ENCODE measurements at regions of chr19 and their contacts with region 1.

Region 1: DNA sequence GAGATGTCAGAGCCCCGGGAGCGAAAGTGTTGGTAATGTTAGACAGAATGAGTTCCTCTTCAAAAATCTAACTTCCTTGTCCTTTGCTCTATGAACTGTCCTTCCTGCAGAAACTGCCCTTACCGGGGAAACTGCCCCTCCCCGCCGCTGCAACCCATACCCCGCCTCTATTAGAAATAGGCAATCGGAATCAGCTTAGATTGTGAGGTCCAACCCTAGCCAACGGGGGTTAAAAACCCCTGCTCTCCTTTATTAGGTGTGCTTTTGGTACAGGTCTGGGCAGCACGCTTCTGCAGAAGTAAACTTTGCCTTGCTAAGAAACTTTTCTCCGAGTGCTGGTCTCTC is 11.5 kb upstream of the CAPNS1 start:
- DNase-seq: no peak
- ATAC-seq: no peak
- H3K4me3 ChIP-seq: peak overlapping the region; percentile 69 to 78
- H3K4me3 Mint-ChIP-seq: peak overlapping the region; percentile 82 to 88 (median 85)
- H3K27ac ChIP-seq: peak overlapping the region; percentile 66
- H3K27ac Mint-ChIP-seq: peak overlapping the region; percentile 88 to 90
- H3K4me1 ChIP-seq: peaks cover 6 to 43% of the 10 kb centered on the region in 2 experiments
- H3K4me1 Mint-ChIP-seq: peaks cover 6 to 34% (median 29%) of the 10 kb centered on the region in 3 donors
- H3K27me3 ChIP-seq: no peaks in the 10 kb centered on the region
- H3K27me3 Mint-ChIP-seq: no peaks in the 10 kb centered on the region

Region 2: GRCh38 chr19:35908973-35909683 is 219.2 kb before region 1 on chr19:
- CTCF ChIA-PET with region 1: no interaction called
- POLR2A ChIA-PET with region 1: no interaction called
- DNase-seq: peak in 19 of 35 experiments; percentile 15 to 76 (median 31)
- ATAC-seq: peak; percentile 27 to 68 (median 40)
- H3K4me3 ChIP-seq: no peak overlapping the region
- H3K4me3 Mint-ChIP-seq: peak overlapping the region in 2 of 3 donors; percentile 24 to 51
- H3K27ac ChIP-seq: peak overlapping the region; percentile 47
- H3K27ac Mint-ChIP-seq: peak overlapping the region; percentile 68 to 81
- H3K4me1 ChIP-seq: peaks cover 13 to 50% of the 10 kb centered on the region in 2 experiments
- H3K4me1 Mint-ChIP-seq: peaks cover 36 to 48% (median 40%) of the 10 kb centered on the region in 3 donors
- H3K27me3 ChIP-seq: no peaks in the 10 kb centered on the region
- H3K27me3 Mint-ChIP-seq: no peaks in the 10 kb centered on the region

Region 3: GRCh38 chr19:36067681-36068080 is 60.7 kb before region 1 on chr19:
- CTCF ChIA-PET with region 1: no interaction called
- POLR2A ChIA-PET with region 1: no interaction called
- DNase-seq: no peak
- ATAC-seq: no peak
- H3K4me3 ChIP-seq: no peak overlapping the region
- H3K4me3 Mint-ChIP-seq: no peak overlapping the region
- H3K27ac ChIP-seq: no peak overlapping the region
- H3K27ac Mint-ChIP-seq: no peak overlapping the region
- H3K4me1 ChIP-seq: no peaks in the 10 kb centered on the region
- H3K4me1 Mint-ChIP-seq: no peaks in the 10 kb centered on the region
- H3K27me3 ChIP-seq: no peaks in the 10 kb centered on the region
- H3K27me3 Mint-ChIP-seq: no peaks in the 10 kb centered on the region

Region 4: DNA sequence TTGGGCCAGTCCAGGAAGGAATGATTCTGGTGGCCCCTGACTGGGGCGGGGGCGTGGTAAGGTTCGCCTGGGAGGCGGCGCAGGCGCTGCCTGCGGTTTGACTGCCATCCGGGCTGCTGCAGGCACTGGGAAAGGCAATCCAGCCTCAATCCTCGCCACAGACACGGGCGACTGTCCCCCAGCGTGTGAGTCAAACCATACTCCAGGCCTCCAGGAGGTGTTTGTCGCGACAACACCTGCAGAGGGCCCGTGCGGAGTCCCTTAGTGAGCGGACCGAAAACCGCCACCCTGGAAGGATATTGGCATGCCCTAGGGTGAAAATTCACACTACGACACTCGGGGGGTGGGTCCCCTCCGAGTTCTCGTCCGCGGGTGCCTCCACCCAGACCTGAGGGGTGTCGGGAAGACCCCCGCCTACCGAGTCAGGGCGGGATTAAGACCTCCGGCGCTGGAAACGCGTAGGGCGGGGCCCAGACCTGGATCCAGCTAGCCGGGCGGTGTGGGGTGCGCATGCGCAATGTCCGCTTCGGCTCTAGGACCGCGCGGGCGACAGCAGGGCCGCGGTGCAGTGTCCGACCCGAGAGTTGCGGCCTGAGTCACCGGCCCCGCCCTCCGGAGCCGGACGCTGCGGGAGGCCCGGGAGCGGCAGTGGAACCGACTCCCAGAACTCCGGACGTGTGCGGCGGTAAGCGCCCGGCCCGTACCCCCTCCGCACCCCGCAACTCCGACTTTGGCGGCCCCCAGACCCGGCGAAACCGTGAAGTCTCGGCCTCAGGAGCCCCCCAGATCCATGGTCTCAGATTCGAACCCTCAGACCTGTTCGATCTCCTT is 11.3 kb after region 1 on chr19 and contains the start of gene CAPNS1:
- CTCF ChIA-PET with region 1: interaction called in 1 of 2 experiments, 10 read pairs
- POLR2A ChIA-PET with region 1: interaction called in 1 of 2 experiments, 3 read pairs
- DNase-seq: peak; percentile 68 to 93 (median 83)
- ATAC-seq: peak; percentile 72 to 77 (median 74)
- H3K4me3 ChIP-seq: peak within 1 kb of the TSS; percentile 55 to 68
- H3K4me3 Mint-ChIP-seq: peak within 1 kb of the TSS; percentile 94 to 96 (median 95)
- H3K27ac ChIP-seq: peak within 1 kb of the TSS; percentile 57
- H3K27ac Mint-ChIP-seq: peak within 1 kb of the TSS; percentile 93 to 96
- H3K4me1 ChIP-seq: peaks cover 0 to 22% of the 10 kb centered on the region in 2 experiments
- H3K4me1 Mint-ChIP-seq: peaks cover 13 to 24% (median 19%) of the 10 kb centered on the region in 3 donors
- H3K27me3 ChIP-seq: peaks cover 0 to 3% of the 10 kb centered on the region in 2 experiments
- H3K27me3 Mint-ChIP-seq: no peaks in the 10 kb centered on the region
- total RNA-seq, gene CAPNS1: 214 to 339 (median 308) TPM

Region 5: DNA sequence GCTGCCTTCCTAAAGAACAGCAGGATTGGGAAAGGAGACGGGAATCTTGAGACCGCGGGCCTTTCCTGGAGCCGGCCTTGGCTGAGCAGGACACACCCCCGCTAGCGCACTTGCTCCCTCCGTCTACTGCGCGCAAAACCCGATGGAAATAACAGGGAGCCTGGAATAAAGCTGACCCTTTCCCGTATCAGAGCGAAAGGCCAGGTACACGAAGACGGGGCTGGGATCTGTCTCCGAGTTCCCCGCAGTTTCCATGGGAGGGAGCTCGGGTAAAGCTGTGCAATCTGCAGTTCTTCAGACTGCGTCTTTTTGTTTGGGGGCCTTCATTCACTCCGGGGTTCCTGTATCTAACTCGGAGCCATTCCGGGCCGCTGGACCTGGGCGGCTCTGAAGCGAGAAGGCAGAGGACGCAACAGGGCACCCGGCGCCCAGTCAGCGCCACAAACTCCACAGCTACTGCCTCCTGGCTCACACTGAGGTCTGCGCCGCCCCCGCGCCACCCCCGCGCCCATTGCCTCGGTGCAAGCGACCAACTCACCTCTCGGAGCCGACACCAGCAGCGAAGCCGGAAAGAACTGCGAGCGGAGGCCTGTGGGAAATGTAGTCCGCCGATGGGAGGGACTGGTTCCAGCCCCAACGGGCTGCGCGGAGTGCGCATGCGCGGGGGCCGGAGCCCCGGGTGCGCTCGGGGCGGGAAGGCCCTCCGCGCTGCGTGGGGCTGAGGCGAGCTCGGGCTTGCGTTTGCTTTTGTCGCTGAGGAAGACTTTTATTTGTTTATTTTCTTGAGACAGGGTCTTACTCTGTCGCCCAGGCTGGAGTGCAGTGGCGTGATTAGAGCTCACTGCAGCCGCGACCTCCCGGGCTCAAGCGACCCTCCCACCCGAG is 250.5 kb after region 1 on chr19 and contains the start of gene ZFP14:
- CTCF ChIA-PET with region 1: no interaction called
- POLR2A ChIA-PET with region 1: no interaction called
- DNase-seq: peak; percentile 87 to 97 (median 94)
- ATAC-seq: peak; percentile 98 to 99 (median 99)
- H3K4me3 ChIP-seq: peak within 1 kb of the TSS; percentile 75 to 78
- H3K4me3 Mint-ChIP-seq: peak within 1 kb of the TSS; percentile 88 to 97 (median 95)
- H3K27ac ChIP-seq: peak within 1 kb of the TSS; percentile 85
- H3K27ac Mint-ChIP-seq: peak within 1 kb of the TSS; percentile 89 to 96
- H3K4me1 ChIP-seq: peaks cover 5 to 22% of the 10 kb centered on the region in 2 experiments
- H3K4me1 Mint-ChIP-seq: peaks cover 23 to 31% (median 24%) of the 10 kb centered on the region in 3 donors
- H3K27me3 ChIP-seq: no peaks in the 10 kb centered on the region
- H3K27me3 Mint-ChIP-seq: no peaks in the 10 kb centered on the region
- total RNA-seq, gene ZFP14: 5.7 to 13.9 (median 11.6) TPM